Activated T-helper 1 cell treated with anti-CD3 and anti-CD28 coated beads, Interleukin-12 subunit alpha, Interleukin-12 subunit beta, Interleukin-2, Interleukin-4 antibody, amounts not matched to agents 30 ng/mL and 10 ng/mL and 1 ng/mL, durations not matched to agents 14 hours and 24 hours and 36 hours (primary cell): ENCODE measurements at regions of chr2 and their contacts with region 1.

Region 1: DNA sequence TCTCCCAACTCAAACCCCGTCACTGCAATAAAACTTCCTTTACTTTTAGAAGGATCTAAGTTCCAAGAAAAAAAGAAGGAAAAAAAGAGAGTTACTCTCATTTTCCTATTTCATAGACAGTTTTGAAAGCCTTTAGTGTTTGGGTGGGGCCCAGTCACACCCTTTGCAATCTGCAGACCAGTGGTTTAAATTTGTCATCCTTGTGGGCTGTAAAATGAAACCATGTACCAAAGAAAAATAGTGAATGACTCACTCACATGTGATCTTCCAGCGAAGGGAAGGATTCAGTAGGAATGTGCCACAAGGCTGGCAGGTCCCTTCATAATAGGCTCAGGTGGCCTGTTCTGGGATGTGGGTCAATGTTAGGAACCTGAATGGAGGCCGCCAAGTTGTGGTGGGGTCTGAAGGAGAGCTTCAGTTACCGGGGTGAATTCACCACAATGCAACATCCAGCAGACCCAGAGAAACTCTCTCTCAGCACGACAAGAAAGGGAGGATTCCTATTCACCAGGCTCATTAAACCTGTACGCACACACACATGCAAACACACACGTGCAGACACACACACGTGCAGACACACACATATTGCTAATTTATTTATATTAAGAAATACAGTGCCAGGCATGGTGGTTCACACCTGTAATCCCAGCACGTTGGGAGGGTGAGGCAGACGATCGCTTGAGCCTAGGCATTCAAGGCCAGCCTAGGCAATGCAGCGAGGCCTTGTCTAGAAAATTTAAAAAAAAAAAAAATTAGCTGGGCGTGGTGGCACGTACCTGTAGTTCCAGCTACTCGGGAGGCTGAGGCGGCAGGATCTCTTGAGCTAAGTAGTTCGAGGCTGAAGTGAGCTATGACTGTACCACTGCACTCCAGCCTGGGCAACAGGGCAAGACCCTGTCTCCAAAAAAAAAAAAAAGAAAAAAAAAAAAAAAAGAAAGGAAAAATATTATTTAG is 28.5 kb downstream of the ANXA4 start:
- DNase-seq: peak; percentile 26
- H3K4me3 Mint-ChIP-seq: peak overlapping the region; percentile 51
- H3K27ac Mint-ChIP-seq: peak overlapping the region; percentile 81
- H3K4me1 Mint-ChIP-seq: peaks cover 80% of the 10 kb centered on the region
- H3K27me3 Mint-ChIP-seq: no peaks in the 10 kb centered on the region

Region 2: DNA sequence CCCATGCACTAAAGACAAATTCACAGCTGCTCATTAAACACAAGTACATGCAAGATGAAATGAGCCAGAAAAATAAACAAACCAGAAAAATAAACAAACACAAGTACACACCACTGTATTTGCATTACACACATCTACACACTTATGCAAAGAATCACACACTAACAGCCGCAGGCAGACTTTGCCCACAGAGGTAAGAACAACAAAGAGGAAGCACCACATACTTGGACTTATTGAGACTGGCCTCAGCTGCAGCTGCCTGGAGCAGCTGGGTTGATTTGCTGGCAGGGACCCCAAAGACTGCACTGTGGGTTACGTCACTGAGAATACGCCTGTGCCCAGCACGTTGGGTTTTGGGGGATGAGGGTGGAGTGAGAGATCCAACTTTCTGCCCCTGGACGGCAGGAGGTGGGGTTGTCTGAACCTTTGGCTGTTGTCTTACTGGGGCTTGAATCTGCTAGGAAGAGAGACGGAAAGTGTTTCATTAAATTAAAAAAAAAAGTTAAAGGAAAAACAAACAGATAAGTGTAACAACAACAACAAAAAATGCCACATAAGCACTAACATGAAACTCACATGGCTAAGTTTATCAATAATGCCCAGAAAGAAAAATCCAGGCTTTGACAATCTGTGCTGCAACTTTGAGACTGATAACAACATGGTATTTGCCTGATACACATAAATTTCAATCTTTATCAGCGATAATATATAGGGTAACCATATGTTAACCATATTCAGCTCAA is 261.3 kb before region 1 on chr2:
- intact Hi-C with region 1: loop called (anchors 5 kb)
- DNase-seq: no peak
- H3K4me3 Mint-ChIP-seq: no peak overlapping the region
- H3K27ac Mint-ChIP-seq: peak overlapping the region; percentile 83
- H3K4me1 Mint-ChIP-seq: peaks cover 37% of the 10 kb centered on the region
- H3K27me3 Mint-ChIP-seq: no peaks in the 10 kb centered on the region

Region 3: DNA sequence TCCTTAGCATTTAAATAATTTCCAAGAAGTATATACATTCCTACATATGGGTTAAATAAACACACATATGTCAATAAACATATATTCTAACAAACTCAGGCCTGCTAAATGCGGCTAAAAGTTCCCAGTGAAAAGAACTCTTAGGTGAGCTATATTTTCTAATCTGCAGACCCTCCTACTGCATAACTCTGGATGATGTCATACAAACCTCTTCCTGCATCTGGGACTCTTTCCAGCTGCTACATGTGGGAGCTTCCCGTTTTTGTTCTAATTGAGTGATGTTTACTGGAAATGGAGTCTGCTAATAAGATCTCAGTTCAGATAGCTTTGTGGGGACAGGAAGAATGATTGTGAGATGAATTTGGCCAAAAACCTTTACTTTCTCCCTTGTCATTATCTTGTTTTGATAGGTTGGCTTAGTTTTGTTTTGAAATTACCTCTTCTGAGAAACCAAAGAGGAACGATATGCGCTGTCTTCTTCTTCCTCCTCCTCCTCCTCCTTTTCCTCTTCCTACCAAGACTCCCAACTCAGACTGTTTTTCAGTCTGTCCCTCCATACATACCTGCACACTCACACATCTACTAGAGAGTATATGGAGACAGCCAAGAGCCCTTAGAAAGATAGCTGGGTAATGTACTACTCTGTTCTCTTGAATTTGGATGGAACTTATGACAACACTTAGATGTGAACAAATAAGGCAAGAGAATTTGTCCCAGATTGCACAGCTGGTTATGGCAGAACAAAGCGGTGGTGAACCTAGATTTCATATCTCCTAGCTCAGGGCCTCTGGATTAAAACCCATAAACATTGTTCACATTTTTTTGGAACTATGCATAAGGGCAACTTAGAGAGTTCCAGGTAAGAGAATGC is 87.1 kb before region 1 on chr2:
- intact Hi-C with region 1: no loop called
- DNase-seq: no peak
- H3K4me3 Mint-ChIP-seq: peak overlapping the region; percentile 27
- H3K27ac Mint-ChIP-seq: peak overlapping the region; percentile 83
- H3K4me1 Mint-ChIP-seq: peaks cover 51% of the 10 kb centered on the region
- H3K27me3 Mint-ChIP-seq: no peaks in the 10 kb centered on the region

Region 4: GRCh38 chr2:69741619-69742466 is 28.6 kb before region 1 on chr2 and contains the start of gene ANXA4:
- intact Hi-C with region 1: loop called (anchors 1 kb)
- DNase-seq: peak; percentile 63
- H3K4me3 Mint-ChIP-seq: peak within 1 kb of the TSS; percentile 98
- H3K27ac Mint-ChIP-seq: peak within 1 kb of the TSS; percentile 96
- H3K4me1 Mint-ChIP-seq: peaks cover 26% of the 10 kb centered on the region
- H3K27me3 Mint-ChIP-seq: peaks cover 6% of the 10 kb centered on the region
- total RNA-seq, gene ANXA4: 36.2 and 38.0 TPM in 2 replicates

Region 5: GRCh38 chr2:69805887-69806286 is 35.4 kb after region 1 on chr2:
- intact Hi-C with region 1: no loop called
- DNase-seq: no peak
- H3K4me3 Mint-ChIP-seq: no peak overlapping the region
- H3K27ac Mint-ChIP-seq: no peak overlapping the region
- H3K4me1 Mint-ChIP-seq: peaks cover 23% of the 10 kb centered on the region
- H3K27me3 Mint-ChIP-seq: no peaks in the 10 kb centered on the region

Region 6: DNA sequence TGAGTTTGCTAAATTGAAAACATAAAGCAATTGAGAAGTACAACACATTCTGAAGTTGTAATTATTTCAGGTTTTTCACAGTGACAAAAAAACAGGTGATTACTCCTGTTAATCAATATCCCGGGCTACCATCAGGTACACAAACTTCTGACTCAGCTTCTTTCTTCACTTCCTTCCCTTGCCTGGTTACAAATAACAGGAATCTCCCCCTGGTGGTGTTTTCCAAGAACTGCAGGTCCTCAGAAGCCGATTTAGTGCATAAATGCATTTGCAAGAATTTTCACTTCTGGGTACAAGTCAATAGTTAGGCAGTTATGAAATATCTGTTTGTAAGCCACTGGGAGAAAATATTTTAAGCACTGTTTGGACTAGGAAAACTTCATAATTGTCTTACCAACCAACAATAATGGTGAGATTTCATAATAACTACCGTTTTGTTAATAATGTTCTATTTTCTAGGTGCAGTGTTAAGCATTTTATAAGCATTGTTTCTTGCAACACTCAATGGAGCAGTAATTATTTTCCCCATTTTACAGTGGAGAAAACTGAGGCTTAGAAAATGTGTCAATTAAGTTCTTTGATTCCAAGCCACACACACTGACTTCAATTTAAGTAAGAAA is 46.6 kb after region 1 on chr2:
- intact Hi-C with region 1: loop called (anchors 1 kb)
- DNase-seq: peak; percentile 68
- H3K4me3 Mint-ChIP-seq: no peak overlapping the region
- H3K27ac Mint-ChIP-seq: no peak overlapping the region
- H3K4me1 Mint-ChIP-seq: peaks cover 13% of the 10 kb centered on the region
- H3K27me3 Mint-ChIP-seq: no peaks in the 10 kb centered on the region

Region 7: DNA sequence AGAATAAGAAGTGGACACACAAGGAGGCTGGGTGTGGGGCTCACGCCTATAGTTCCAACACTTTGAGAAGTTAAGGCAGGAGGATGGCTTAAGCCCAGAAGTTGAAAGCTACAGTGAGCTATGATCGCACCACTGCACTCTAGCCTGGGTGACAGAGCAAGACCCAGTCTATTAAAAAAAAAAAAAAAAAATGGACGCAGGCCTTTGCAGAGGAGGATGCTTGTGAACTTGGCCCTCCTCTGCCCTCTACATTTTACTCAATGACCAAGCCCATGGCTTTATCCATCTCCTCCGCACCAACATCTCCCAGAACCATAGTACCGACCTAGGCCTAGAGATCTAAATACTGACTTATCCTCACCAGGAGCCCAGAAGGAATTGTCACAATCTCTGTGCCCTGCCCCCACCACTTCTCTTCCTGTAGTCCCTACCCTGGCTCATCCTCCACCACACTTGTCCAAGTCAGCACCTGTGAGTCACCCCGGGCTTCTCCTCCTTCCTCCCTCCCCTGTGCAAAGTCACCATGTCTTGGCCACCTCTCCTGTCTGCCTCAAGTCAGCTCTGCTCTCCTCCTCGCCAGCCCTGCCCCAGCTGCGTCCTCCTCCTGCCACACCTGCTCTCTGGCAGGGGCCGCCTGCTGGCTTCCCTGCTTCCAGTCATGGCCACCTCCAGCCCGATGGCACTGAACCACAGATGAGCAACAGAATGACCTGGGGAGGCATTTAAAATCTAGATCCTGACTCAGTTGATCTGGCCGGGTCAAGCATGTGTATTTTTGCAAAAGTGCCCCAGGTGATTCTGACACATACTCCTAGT is 226.8 kb after region 1 on chr2:
- intact Hi-C with region 1: no loop called
- DNase-seq: no peak
- H3K4me3 Mint-ChIP-seq: no peak overlapping the region
- H3K27ac Mint-ChIP-seq: no peak overlapping the region
- H3K4me1 Mint-ChIP-seq: peaks cover 24% of the 10 kb centered on the region
- H3K27me3 Mint-ChIP-seq: peaks cover 2% of the 10 kb centered on the region

Region 8: DNA sequence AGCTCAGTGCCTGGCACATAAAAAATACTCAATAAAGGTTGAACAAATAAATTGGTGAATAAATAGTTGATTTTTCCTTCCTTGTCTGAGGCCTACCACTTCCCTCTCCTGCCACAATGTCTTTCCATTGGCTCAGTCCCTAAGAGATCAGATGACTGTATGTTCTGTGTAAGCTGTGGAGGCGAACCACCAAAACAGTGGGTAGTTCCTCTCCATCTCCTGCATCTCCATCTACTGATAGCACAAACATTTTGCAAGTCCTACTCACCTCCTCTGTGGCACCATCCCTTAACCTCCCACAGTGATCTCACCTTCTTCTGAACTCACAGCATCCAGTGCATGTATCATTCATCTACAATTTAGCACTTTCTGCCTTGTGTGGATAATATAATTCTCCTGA is 367.0 kb after region 1 on chr2:
- intact Hi-C with region 1: loop called (anchors 1 kb)
- DNase-seq: no peak
- H3K4me3 Mint-ChIP-seq: peak overlapping the region; percentile 61
- H3K27ac Mint-ChIP-seq: peak overlapping the region; percentile 86
- H3K4me1 Mint-ChIP-seq: peaks cover 66% of the 10 kb centered on the region
- H3K27me3 Mint-ChIP-seq: no peaks in the 10 kb centered on the region